ENCODE measurements at regions of chr3 and their contacts with region 1.

Region 1: GRCh38 chr3:146189519-146190173 is 28.7 kb upstream of the PLOD2 start:
- DNase-seq: peak; percentile 70
- H3K4me3 ChIP-seq: no peak overlapping the region
- H3K27ac ChIP-seq: peak overlapping the region; percentile 43
- H3K4me1 ChIP-seq: peaks cover 21% of the 10 kb centered on the region
- H3K27me3 ChIP-seq: no peaks in the 10 kb centered on the region
- CTCF ChIP-seq: peak; percentile 62 to 68
- POLR2A ChIP-seq: no peak

Region 2: DNA sequence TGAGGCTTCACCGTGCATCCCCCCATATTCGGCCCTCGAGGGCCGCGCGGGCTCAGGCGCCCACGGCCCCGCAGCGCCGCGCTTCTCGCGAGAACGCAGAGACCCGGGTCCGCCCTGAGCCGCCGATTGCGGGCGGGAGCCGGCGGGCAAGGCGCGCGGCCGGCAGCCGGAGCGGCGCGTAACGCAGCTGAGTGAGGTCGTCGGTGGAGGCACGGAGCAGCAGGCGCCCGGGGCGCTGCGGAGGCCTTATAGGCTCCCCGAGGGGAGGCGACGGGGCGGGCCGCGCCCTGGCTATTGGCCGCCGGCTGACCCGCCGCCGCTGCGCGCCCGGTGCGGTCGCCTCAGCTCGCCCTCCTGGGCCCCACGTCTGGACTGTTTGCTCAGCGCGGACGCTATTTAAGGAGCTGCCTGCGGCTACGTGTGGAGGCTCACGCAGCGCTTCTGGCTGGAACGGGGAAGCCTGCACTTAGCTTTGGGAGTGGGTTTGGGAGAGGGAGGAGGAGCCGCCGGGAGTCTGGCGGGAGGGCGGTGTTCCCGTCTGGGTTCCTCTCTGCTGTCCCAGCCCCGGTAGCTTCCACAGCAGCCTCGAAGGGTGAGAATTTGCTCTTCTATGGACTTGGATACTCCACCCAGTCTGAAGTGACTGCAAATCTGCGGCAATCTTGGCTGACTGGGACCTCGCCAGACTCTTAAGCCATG is 28.5 kb before region 1 on chr3 and contains the start of gene PLOD2:
- CTCF ChIA-PET with region 1: interaction called, 115 read pairs
- POLR2A ChIA-PET with region 1: interaction called, 20 read pairs
- dilution Hi-C with region 1: no loop called
- intact Hi-C with region 1: loop called (anchors 2 kb)
- DNase-seq: peak; percentile 90
- H3K4me3 ChIP-seq: peak within 1 kb of the TSS; percentile 55 to 94 (median 80)
- H3K27ac ChIP-seq: peak within 1 kb of the TSS; percentile 90
- H3K4me1 ChIP-seq: peaks cover 72% of the 10 kb centered on the region
- H3K27me3 ChIP-seq: no peaks in the 10 kb centered on the region
- CTCF ChIP-seq: no peak
- POLR2A ChIP-seq: peak; percentile 98
- total RNA-seq, gene PLOD2: 193 and 228 TPM in 2 replicates

Region 3: DNA sequence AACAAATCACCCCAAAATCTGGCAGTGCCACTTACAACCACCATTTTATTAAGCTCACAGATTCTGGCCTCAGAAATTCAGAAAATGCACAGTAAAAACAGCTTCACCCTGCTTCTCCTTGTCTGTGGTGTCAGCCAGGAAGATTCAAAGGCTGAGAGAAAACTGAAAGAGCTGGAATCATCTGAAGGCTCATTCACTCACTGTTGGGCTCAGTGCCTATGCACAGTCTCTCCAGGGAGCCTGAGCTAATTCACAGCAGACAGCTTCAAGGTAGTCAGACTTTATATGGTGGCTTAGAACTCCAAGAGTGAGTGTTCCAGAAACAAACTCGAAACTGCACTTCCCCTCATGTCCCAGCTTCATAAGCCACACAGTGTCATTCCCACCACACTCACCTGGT is 12.1 kb before region 1 on chr3:
- CTCF ChIA-PET with region 1: interaction called, 36 read pairs
- POLR2A ChIA-PET with region 1: no interaction called
- dilution Hi-C with region 1: no loop called
- intact Hi-C with region 1: no loop called
- DNase-seq: no peak
- H3K4me3 ChIP-seq: peak overlapping the region in 1 of 3 experiments; percentile 26
- H3K27ac ChIP-seq: peak overlapping the region; percentile 99
- H3K4me1 ChIP-seq: peaks cover 37% of the 10 kb centered on the region
- H3K27me3 ChIP-seq: no peaks in the 10 kb centered on the region
- CTCF ChIP-seq: no peak
- POLR2A ChIP-seq: no peak

Region 4: GRCh38 chr3:146218880-146219866 is 29.5 kb after region 1 on chr3:
- CTCF ChIA-PET with region 1: interaction called, 30 read pairs
- POLR2A ChIA-PET with region 1: no interaction called
- dilution Hi-C with region 1: no loop called
- intact Hi-C with region 1: loop called (anchors 1 kb)
- DNase-seq: peak; percentile 71
- H3K4me3 ChIP-seq: no peak overlapping the region
- H3K27ac ChIP-seq: peak overlapping the region; percentile 10
- H3K4me1 ChIP-seq: peaks cover 50% of the 10 kb centered on the region
- H3K27me3 ChIP-seq: no peaks in the 10 kb centered on the region
- CTCF ChIP-seq: peak; percentile 37 to 39
- POLR2A ChIP-seq: no peak

Region 5: GRCh38 chr3:146382386-146382785 is 192.7 kb after region 1 on chr3:
- CTCF ChIA-PET with region 1: interaction called, 13 read pairs
- POLR2A ChIA-PET with region 1: no interaction called
- dilution Hi-C with region 1: no loop called
- intact Hi-C with region 1: loop called (anchors 1 kb)
- DNase-seq: peak; percentile 34
- H3K4me3 ChIP-seq: no peak overlapping the region
- H3K27ac ChIP-seq: no peak overlapping the region
- H3K4me1 ChIP-seq: no peaks in the 10 kb centered on the region
- H3K27me3 ChIP-seq: no peaks in the 10 kb centered on the region
- CTCF ChIP-seq: peak in 1 of 2 donors; percentile 25
- POLR2A ChIP-seq: no peak

Measured in endothelial cell of umbilical vein (primary cell).